ENCODE measurements at regions of chr21 and their contacts with region 1.

Region 1: DNA sequence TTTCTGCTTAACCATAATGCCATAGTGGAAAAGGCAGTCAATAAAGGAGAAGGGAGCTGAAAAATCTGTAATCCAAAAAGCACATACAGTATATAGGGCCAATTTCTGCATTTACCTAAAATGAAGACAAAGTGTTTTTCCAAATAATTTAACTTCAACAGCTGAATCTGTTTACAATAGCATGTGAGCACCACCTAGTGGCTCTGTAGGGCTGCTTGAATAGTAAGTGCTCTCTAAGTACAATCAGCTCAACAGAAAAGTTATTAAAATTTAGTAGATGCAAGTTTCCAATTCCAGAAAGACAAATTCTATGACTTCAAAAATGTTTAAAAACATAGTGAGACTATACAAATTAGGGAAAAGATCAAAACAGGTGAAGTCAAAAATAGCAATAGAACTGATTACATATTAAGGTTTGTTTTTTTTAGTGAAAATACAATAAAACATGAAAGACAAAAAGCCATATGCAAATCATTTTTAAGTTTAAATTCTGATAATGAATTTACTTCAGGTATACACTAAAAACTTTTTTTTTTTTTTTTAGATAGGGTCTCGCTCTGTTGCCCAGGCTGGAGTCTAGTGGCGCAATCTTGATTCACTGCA is 220.0 kb downstream of the SETD4 start:
- DNase-seq: peak; percentile 26 to 45
- ATAC-seq: peak; percentile 46 to 68
- H3K4me3 ChIP-seq: no peak overlapping the region
- H3K27ac ChIP-seq: peak overlapping the region in 1 of 4 donors; percentile 5
- H3K4me1 ChIP-seq: peaks cover 0 to 4% of the 10 kb centered on the region in 2 donors
- H3K27me3 ChIP-seq: no peaks in the 10 kb centered on the region
- CTCF ChIP-seq: peak; percentile 43 to 78 (median 63)
- POLR2A ChIP-seq: no peak

Region 2: DNA sequence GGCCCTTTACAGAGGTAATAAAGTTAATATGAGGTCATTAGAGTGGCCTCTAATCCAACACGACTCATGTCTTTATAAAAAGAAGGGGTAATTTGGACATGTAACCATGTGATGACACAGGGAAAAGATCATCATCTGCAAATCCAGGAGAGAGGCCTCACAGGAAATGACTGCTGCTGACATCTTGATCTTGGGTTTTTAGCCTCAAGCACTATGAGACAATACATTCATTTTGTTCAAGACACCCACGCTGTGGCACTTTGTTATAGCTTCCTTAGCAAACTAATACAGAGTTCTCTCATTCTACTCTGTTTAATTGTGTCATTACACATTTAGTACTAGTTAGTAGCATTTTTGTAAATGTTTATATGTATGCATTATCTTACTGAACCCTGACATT is 727.2 kb before region 1 on chr21:
- in situ Hi-C with region 1: no loop called
- intact Hi-C with region 1: no loop called
- DNase-seq: no peak
- ATAC-seq: no peak
- H3K4me3 ChIP-seq: no peak overlapping the region
- H3K27ac ChIP-seq: no peak overlapping the region
- H3K4me1 ChIP-seq: no peaks in the 10 kb centered on the region
- H3K27me3 ChIP-seq: no peaks in the 10 kb centered on the region
- CTCF ChIP-seq: no peak
- POLR2A ChIP-seq: no peak

Region 3: GRCh38 chr21:35932232-35932911 is 92.1 kb after region 1 on chr21:
- in situ Hi-C with region 1: no loop called
- intact Hi-C with region 1: loop called (anchors 5 kb)
- DNase-seq: peak; percentile 62 to 69
- ATAC-seq: peak; percentile 94 to 97
- H3K4me3 ChIP-seq: peak overlapping the region in 1 of 4 donors; percentile 9
- H3K27ac ChIP-seq: peak overlapping the region; percentile 67 to 77 (median 72)
- H3K4me1 ChIP-seq: peaks cover 8 to 19% of the 10 kb centered on the region in 2 donors
- H3K27me3 ChIP-seq: no peaks in the 10 kb centered on the region
- CTCF ChIP-seq: no peak
- POLR2A ChIP-seq: peak; percentile 9 to 34

Measured in gastrocnemius medialis (tissue), 4 donors.